MCF 10A (cell line): ENCODE measurements at regions of chr6 and their contacts with region 1.

Region 1: DNA sequence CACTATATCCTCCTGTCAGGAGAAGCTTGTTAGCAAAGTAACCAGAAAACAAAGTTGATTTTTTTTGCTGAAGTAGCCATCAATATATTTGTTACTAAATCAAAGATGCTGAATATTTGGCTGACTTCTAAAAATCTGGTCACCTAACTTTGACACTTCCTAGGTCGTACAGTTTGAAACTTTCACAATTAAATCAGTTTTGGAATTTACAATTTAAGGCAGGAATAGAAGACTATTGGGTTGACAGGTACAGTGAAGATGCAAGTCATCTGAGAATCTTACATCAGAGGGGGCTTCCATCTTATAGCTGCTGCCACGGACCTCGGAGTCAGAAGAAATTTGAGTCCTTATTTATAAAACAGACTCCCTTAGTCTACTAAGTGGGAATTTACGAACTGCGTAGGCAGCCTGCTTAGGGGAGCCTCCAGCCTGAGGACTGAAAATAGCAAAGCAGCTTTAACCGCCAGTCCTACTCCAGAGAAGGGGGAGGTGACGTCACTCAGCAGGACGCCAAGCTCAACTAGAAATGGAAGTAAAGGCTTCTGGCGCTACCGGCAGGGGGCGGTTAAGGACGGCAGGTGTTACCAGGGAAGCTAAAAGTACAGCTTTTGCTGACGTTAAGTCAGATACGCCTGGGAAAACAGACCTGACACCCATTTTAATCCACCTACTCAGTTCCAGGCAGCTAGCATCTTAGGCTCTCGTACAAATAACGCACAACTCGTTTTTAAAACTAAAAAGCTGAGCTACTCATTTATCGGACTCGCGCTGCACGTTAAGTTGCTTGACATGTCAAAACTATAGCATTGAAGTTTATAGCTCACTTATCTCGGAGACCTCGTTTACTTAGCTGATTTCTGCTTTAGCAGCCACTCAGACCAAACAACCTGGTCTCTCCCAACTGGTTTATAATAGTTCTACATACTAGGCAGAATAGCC is 61.1 kb upstream of the HFE start:
- DNase-seq: peak; percentile 96
- H3K4me3 Mint-ChIP-seq: peak overlapping the region; percentile 83
- H3K27ac Mint-ChIP-seq: peak overlapping the region; percentile 84
- H3K4me1 Mint-ChIP-seq: peaks cover 17% of the 10 kb centered on the region
- H3K27me3 Mint-ChIP-seq: no peaks in the 10 kb centered on the region
- CTCF ChIP-seq: peak; percentile 81

Region 2: GRCh38 chr6:24936641-24937317 is 1089.4 kb before region 1 on chr6:
- CTCF ChIA-PET with region 1: no interaction called
- POLR2A ChIA-PET with region 1: no interaction called
- intact Hi-C with region 1: no loop called
- DNase-seq: peak; percentile 79
- H3K4me3 Mint-ChIP-seq: no peak overlapping the region
- H3K27ac Mint-ChIP-seq: no peak overlapping the region
- H3K4me1 Mint-ChIP-seq: peaks cover 15% of the 10 kb centered on the region
- H3K27me3 Mint-ChIP-seq: no peaks in the 10 kb centered on the region
- CTCF ChIP-seq: no peak

Region 3: DNA sequence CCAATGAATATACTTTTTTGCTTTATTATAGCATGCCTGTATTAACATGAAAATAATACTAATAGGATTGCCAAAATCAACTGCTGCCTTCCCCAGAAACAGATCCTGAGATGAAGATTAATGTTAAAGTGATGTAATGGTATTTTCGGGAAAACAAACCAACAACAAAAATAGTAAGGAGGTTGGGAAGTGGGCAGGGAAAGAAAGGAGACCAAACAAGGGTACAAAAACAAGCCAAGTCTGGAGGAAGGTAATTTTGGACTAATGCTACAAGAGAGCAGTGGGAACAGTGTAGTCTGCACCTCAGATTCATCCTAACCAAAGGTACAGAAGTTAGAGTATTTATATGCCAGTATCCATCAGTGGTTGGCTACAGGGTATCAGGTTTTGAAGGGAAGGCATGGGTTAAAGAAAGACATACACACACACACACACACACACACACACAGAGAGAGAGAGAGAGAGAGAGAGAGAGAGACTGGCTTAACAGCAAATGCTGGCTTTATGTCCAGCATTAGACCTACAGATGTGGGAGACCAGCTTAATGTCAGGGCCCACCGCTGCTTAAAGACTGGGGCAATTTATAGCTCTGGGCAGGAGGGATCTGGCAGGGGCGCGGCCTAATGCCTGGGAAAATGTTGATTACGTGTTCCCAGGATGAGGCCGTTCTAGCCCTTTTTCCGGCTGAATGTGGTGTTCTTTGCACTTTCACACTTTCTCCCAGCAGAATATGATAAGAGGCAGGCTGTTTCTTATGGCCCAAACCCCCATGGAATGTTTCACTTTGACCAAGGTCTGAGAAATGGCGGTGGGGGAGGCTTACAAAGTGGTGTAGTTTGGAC is 190.5 kb before region 1 on chr6:
- CTCF ChIA-PET with region 1: no interaction called
- POLR2A ChIA-PET with region 1: no interaction called
- intact Hi-C with region 1: no loop called
- DNase-seq: no peak
- H3K4me3 Mint-ChIP-seq: no peak overlapping the region
- H3K27ac Mint-ChIP-seq: no peak overlapping the region
- H3K4me1 Mint-ChIP-seq: no peaks in the 10 kb centered on the region
- H3K27me3 Mint-ChIP-seq: peaks cover 34% of the 10 kb centered on the region
- CTCF ChIP-seq: no peak

Region 4: DNA sequence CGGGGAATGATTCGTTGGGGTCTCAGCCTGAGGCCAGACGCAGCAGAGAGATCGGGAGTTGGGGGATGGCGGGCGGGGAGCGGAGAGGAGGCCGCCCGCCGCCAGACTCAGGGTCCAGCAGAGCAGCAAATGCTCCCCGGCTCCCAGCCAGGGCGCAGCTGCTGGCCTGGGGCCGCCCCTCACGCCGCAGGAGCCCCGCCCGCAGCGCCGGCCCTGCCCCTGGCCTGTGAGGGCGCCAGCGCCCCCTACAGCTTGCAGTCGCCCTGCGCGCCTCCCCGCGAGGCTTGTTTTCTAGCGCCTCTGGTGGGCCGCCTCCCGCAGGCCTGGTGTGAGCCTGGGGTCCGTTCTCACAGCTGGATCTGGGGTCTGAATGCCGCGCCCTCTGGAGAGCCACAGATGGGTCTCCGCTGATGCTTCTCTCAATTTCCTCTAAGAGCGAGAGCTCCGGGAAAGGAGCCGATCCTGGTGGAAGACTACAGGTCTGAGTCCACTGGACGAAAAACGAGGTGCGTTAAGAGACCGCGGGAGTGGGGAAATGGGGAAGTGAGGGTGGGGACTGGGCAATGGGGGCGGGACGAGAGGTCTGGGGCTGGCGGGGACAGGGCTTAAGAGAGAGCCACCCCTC is 33.6 kb before region 1 on chr6:
- CTCF ChIA-PET with region 1: interaction called, 8 read pairs
- POLR2A ChIA-PET with region 1: interaction called, 147 read pairs
- intact Hi-C with region 1: no loop called
- DNase-seq: peak; percentile 93
- H3K4me3 Mint-ChIP-seq: peak overlapping the region; percentile 86
- H3K27ac Mint-ChIP-seq: peak overlapping the region; percentile 96
- H3K4me1 Mint-ChIP-seq: peaks cover 7% of the 10 kb centered on the region
- H3K27me3 Mint-ChIP-seq: no peaks in the 10 kb centered on the region
- CTCF ChIP-seq: peak; percentile 94

Region 5: GRCh38 chr6:26054857-26055669 is 28.9 kb after region 1 on chr6:
- CTCF ChIA-PET with region 1: interaction called, 6 read pairs
- POLR2A ChIA-PET with region 1: interaction called, 1,354 read pairs
- intact Hi-C with region 1: loop called (anchors 1 kb)
- DNase-seq: peak; percentile 96
- H3K4me3 Mint-ChIP-seq: peak overlapping the region; percentile 74
- H3K27ac Mint-ChIP-seq: peak overlapping the region; percentile 92
- H3K4me1 Mint-ChIP-seq: no peaks in the 10 kb centered on the region
- H3K27me3 Mint-ChIP-seq: no peaks in the 10 kb centered on the region
- CTCF ChIP-seq: no peak

Region 6: DNA sequence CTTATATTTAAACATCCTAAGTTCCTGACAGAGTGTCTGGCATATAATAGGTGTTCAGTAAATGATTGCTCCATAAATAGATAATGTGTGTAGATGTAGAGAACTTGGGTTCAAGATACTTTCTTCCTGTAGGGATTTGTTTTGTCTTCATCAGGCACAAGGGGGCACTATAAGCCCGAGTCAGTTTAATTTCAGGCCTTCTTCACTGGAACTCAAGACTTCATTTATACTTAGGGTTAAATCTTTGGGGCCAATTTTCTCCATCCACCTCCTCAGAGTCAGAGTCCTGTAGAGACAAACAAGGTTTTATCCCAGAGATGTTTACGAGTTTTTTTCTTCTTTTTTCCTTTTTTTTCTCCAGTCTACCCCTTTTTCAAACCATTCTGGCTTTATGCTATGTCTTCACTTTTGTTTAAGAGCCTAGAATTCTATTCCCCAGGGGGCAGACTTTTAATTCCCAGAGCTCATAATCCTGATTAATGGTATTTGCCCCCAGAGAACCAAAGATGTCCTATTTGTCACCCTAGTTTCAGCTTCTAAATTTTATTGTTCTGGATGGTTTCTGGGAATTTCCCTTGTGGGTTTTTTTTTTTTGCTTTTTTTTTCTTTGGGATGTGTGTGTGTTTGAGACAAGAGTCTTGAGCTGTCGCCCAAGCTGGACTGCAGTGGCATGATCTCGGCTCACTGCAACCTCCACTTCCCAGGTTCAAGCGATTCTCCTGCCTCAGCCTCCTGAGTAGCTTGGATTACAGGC is 149.4 kb after region 1 on chr6:
- CTCF ChIA-PET with region 1: no interaction called
- POLR2A ChIA-PET with region 1: interaction called, 34 read pairs
- intact Hi-C with region 1: no loop called
- DNase-seq: peak; percentile 82
- H3K4me3 Mint-ChIP-seq: peak overlapping the region; percentile 23
- H3K27ac Mint-ChIP-seq: peak overlapping the region; percentile 70
- H3K4me1 Mint-ChIP-seq: peaks cover 28% of the 10 kb centered on the region
- H3K27me3 Mint-ChIP-seq: no peaks in the 10 kb centered on the region
- CTCF ChIP-seq: peak; percentile 70

Region 7: DNA sequence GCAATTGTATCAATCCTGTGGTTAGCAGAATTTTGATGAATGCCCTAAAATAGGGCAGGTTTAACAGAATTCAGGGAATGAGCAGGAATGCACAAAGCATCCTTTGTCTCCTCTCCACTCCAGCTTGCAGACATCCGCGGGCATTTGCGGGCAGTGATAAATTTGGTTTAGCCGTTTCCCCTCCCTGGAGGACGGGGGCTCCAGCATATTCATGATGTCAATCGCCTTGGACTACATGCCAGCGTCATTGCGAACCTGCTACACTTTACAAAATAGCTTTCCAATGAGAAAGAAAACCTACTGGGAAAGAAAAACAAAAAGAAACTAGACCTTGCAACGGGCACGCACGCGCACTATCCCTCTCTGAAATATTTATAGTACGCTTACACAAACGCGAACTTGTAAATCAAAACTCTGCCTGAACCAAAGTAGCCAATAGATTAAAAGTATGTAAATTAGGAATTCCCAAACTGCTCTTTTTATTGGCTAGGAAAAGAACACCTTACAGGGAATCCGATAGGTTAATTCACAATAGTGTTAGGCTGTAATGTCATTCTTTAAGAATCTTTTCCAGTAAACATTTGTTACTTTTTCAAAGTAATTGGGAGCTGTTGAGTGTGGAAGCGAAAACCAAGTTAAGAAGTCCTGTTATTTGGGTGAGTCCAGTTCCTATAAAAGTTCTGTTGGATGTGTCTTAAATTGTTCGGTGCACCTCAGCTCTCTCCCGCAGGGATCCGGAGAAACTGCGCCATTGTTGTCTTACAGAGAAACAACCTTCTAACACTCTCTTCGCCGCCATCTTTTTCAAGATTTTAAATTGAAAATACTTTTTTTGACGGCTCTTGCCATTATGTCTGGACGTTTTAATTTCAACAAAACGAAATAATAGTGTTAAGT is 197.7 kb after region 1 on chr6:
- CTCF ChIA-PET with region 1: no interaction called
- POLR2A ChIA-PET with region 1: interaction called, 12 read pairs
- intact Hi-C with region 1: no loop called
- DNase-seq: peak; percentile 91
- H3K4me3 Mint-ChIP-seq: no peak overlapping the region
- H3K27ac Mint-ChIP-seq: no peak overlapping the region
- H3K4me1 Mint-ChIP-seq: peaks cover 6% of the 10 kb centered on the region
- H3K27me3 Mint-ChIP-seq: no peaks in the 10 kb centered on the region
- CTCF ChIP-seq: no peak

Region 8: DNA sequence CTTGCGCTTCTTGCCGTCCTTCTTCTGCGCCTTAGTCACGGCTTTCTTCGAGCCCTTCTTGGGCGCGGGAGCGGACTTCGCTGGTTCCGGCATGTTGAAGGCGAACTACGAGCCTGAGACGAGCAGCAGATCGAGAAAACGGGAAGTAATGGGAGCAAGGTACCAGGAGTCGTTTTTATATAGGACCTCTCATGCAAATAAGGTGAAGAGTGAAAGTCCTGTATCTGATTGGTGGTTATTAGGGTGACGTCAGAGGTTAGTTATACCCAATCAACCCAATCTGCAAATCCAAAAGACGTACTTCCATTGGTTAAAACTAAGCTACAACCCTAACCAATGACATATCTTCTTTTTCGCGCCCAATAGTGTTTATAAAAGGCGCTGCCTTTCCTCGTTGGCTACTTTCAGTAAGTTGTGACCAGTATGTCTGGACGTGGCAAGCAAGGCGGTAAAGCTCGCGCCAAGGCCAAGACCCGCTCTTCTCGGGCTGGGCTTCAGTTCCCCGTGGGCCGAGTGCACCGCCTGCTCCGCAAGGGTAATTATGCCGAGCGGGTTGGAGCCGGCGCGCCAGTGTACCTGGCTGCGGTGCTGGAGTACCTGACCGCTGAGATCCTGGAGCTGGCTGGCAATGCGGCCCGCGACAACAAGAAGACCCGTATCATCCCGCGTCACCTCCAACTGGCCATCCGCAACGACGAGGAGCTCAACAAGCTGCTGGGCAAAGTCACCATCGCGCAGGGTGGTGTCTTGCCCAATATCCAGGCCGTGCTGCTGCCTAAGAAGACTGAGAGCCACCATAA is 1120.7 kb after region 1 on chr6:
- CTCF ChIA-PET with region 1: no interaction called
- POLR2A ChIA-PET with region 1: interaction called, 37 read pairs
- intact Hi-C with region 1: no loop called
- DNase-seq: peak; percentile 99
- H3K4me3 Mint-ChIP-seq: no peak overlapping the region
- H3K27ac Mint-ChIP-seq: no peak overlapping the region
- H3K4me1 Mint-ChIP-seq: no peaks in the 10 kb centered on the region
- H3K27me3 Mint-ChIP-seq: no peaks in the 10 kb centered on the region
- CTCF ChIP-seq: no peak

Region 9: DNA sequence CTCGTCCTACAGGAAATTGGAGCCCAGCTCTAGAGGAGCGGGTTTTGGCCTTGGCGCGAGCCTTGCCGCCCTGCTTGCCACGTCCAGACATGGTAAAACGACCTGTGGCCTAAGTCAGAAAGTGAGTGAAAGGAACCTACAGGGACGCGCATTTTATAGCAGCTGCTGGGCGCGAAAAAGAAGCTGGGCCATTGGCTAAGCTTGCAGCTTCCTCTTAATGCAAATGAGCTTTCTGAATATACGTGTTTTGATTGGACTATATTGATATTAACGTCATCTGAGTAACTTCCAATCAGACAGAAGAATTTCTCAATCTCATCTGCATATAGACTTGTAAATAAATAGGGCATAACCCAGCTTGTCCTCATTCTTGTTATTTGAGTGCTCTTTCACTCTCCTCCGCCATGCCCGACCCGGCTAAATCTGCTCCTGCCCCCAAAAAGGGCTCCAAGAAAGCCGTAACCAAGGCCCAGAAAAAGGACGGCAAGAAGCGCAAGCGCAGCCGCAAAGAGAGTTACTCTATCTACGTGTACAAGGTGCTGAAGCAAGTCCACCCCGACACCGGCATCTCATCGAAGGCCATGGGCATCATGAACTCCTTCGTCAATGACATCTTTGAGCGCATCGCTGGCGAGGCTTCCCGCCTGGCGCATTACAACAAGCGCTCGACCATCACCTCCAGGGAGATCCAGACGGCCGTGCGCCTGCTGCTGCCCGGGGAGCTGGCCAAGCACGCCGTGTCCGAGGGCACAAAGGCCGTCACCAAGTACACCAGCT is 1867.1 kb after region 1 on chr6:
- CTCF ChIA-PET with region 1: no interaction called
- POLR2A ChIA-PET with region 1: interaction called, 23 read pairs
- intact Hi-C with region 1: loop called (anchors 5 kb)
- DNase-seq: peak; percentile 98
- H3K4me3 Mint-ChIP-seq: no peak overlapping the region
- H3K27ac Mint-ChIP-seq: no peak overlapping the region
- H3K4me1 Mint-ChIP-seq: peaks cover 12% of the 10 kb centered on the region
- H3K27me3 Mint-ChIP-seq: no peaks in the 10 kb centered on the region
- CTCF ChIP-seq: no peak